AG04450 (cell line): ENCODE measurements at regions of chr6 and their contacts with region 1.

Region 1: DNA sequence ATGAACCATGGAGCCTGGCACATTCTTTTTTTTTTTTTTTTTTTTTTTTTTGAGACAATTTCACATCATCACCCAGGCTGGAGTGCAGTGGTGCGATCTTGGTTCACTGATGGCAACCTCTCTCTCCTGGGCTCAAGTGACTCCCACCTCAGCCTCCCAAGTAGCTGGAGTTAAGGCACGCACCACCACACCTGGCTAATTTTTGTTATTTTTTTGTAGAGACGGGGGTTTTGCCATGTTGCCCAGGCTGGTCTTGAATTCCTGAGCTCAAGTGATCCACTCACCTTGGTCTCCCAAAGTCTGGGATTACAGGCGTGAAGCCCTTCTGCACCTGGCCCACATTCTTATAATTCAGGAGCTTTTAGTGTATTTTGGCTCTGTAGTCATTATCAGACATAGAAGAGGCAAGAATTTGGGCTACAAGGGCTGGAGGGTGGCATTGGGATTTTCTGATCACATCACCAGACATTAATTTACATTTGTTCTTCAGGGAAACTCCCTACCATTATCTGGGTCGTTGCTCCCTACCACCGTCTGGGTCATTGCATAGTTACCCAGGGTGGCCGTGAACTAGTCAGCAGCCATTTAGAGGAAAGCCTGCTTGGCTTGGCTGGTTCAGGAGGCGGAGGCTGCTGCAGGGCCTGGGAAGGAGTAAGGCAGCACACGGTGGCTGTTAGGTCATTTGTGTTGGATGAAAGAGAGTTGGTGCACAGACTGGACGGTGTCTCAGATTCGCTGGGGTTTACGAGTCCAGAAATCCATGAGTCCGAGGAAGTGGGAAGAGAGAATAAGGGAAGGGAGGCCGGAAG is 17.6 kb downstream of the ARID1B start:
- DNase-seq: no peak
- H3K4me3 ChIP-seq: no peak overlapping the region
- H3K27ac ChIP-seq: no peak overlapping the region
- H3K27me3 ChIP-seq: no peaks in the 10 kb centered on the region
- CTCF ChIP-seq: no peak

Region 2: GRCh38 chr6:156126535-156126934 is 668.2 kb before region 1 on chr6:
- CTCF ChIA-PET with region 1: no interaction called
- POLR2A ChIA-PET with region 1: no interaction called
- DNase-seq: no peak
- H3K4me3 ChIP-seq: no peak overlapping the region
- H3K27ac ChIP-seq: no peak overlapping the region
- H3K27me3 ChIP-seq: peaks cover 3% of the 10 kb centered on the region
- CTCF ChIP-seq: no peak

Region 3: GRCh38 chr6:156427345-156427744 is 367.4 kb before region 1 on chr6:
- CTCF ChIA-PET with region 1: no interaction called
- POLR2A ChIA-PET with region 1: interaction called, 14 read pairs
- DNase-seq: peak; percentile 73
- H3K4me3 ChIP-seq: no peak overlapping the region
- H3K27ac ChIP-seq: peak overlapping the region; percentile 25
- H3K27me3 ChIP-seq: no peaks in the 10 kb centered on the region
- CTCF ChIP-seq: no peak

Region 4: GRCh38 chr6:156809034-156809433 is 14.3 kb after region 1 on chr6:
- CTCF ChIA-PET with region 1: no interaction called
- POLR2A ChIA-PET with region 1: no interaction called
- DNase-seq: no peak
- H3K4me3 ChIP-seq: no peak overlapping the region
- H3K27ac ChIP-seq: no peak overlapping the region
- H3K27me3 ChIP-seq: no peaks in the 10 kb centered on the region
- CTCF ChIP-seq: no peak